ENCODE measurements at regions of chr2 and their contacts with region 1.

Region 1: DNA sequence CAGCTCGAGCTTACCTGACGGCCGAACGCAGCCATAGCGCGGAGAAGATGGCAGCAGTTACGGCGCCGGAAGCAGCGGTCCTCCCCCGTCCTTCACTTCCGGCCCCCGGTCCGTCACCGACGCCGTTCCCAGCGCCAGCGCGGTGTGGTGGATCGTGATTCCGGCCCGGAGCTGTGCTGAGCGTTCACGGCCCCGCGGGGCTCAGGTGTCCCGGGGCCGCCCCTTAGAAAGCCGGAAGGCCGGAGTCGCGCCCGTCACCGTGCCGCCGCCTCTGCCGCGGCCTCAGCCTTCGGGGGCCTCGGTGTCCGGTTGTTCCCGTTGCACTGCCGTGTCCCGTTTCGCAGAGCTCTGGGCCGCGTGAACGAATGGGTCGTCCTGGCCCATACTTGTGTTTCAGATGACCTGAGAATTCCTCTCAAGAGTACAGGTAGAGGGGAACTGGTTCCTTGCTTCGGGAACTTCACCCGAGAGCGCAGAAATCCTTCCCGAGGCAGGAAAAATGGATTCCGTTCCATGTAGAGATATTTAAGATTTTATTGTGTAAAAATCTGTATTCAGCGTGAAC is at the start of gene MTERF4:
- DNase-seq: peak; percentile 93
- ATAC-seq: peak; percentile 99
- total RNA-seq, gene MTERF4: 23.0 TPM

Region 2: GRCh38 chr2:241149925-241150659 is 47.8 kb after region 1 on chr2 and contains the start of gene PPP1R7:
- intact Hi-C with region 1: loop called (anchors 1 kb)
- DNase-seq: peak; percentile 98
- ATAC-seq: peak; percentile 97
- total RNA-seq, gene PPP1R7: 66.6 TPM

Region 3: DNA sequence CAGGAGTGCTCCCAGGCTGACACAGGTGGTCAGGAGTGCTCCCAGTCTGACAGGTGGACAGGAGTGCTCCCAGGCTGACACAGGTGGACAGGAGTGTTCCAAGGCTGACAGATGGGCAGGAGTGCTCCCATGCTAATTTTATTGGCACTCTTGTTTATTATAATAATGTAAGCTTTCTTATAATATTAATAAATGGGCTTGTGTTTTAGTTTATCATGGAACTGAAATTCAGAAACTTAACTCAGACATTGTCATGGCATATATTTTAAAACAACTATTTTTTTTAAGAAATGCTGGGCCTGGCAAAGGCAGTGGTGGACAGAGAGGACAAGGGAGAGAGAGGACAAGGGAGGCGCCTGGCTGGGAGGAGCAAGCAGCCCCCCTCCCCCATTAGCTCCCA is 104.8 kb after region 1 on chr2:
- intact Hi-C with region 1: no loop called
- DNase-seq: peak; percentile 17
- ATAC-seq: no peak

Region 4: DNA sequence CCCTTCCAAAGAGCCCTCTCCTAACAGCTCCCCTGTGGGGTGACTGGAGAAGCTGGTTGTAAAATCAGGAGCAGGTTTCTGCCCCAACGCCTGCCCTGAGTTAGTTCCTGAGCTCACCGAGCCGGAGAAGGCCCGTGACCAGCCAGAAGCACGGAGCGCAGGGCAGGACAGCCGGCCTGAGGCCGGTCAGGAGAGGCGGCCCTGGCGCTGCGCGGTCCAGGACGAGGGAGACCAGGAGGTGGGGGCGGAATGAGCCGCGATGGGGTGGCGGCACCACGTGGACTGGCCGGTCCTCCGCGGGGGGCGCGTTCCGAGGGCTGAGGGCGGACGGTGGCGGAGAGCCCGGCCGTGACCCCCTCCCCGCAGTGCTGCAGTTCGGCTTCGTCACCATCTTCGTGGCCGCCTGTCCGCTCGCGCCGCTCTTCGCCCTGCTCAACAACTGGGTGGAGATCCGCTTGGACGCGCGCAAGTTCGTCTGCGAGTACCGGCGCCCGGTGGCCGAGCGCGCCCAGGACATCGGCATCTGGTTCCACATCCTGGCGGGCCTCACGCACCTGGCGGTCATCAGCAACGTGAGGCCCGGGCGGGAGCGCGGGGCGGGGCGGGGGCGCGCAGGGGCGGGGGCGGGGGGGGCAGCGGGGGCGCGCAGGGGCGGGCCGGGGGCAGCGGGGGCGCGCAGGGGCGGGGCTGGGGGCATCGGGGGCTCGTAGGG is 115.2 kb after region 1 on chr2:
- intact Hi-C with region 1: loop called (anchors 5 kb)
- DNase-seq: peak; percentile 88
- ATAC-seq: peak; percentile 85

Region 5: DNA sequence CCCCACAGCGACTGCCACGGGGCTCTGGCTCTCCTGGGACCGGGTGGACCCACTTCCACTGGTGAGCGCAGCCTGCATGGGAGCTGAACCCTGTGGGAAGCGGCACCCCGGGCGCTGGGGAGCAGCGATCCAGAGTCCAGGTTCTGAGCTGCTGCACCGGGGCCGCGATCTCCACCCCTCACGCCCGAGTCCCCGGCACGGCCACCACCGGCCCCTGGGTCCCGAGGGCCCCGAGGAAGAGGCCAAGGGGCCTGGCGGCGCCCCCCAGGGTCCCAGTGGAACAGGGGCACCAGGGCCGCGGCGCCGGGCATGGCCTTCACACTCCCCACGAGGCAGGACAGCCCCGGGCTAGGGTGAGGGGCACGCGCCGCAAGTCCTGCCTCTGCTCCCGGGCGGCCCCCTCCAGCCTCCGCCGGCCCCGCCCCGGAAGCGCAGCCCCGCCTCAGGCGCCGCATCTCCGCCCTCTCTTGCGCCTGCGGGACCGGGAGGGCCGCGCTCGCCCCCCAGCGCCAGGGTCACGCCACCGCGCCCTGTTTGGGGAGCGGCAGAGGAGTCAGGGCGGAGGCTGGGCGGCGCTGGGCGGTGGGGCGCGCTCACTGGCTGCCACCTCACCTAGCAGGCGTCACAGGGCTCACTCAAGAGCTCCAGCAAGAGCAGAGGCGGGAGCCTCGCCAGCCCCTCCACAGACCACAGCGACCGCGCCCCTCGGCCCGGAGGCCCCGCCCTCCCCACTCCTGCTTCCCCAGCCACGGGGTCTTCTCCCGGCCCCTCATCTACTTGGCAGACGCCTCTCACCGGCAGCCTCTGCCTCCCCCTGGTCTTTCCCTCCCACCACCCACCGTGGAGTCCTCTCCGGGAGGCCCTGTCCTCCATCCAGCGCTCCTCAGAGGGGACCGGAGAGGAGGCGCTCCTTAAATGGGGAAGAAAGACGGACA is 507.8 kb after region 1 on chr2:
- intact Hi-C with region 1: loop called (anchors 10 kb)
- DNase-seq: peak; percentile 91
- ATAC-seq: peak; percentile 89